ENCODE measurements at regions of chr2 and their contacts with region 1.

Region 1: DNA sequence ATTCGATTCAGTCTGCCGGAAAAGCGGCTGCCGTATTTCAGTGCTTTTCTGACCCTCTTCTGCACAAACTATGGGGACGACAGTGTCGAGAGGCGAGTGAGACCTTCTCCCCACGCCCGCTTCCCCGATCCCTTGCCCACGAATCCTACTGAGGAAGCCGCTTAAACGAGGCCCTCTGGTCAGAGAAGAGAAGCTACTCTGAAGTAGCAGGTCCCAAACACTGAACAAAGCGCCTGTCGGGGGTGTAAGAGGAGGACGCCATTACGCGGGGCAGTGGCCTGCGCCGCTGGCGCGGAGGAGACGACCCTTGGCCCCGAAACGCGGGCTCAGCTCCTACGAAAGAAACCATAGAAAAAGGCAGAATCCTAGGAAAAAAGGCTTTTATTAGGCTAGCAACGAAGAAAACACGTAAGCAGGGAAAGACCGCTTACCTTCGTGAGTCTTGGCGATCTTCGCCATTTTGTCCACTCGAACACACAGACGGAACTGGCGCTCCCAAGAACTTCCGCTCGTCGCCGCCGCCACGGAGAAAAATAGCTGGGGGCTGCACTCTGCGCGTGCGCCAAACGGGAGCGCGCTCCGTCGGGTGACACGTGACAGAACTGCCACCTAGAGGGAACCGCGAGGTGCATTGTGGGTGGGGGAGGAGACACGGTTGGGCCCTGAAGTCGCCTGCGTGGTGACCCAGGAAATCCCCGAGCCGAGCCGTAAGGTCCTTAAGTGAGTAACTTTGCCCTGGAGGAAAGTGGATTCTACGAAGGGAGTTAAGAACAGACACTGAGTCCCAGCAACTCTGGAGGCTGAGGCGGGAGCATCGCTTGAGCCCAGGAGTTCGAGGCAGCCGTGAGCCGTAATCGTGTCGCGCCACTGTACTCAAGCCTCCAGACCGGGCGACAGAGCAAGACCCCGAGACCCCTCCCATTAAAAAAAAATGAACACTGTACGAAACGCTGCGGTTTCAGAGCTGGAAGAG is at the start of gene SF3B1:
- DNase-seq: peak; percentile 100
- H3K4me3 Mint-ChIP-seq: peak within 1 kb of the TSS; percentile 99
- H3K27ac Mint-ChIP-seq: peak within 1 kb of the TSS; percentile 100
- H3K4me1 Mint-ChIP-seq: peaks cover 46% of the 10 kb centered on the region
- H3K27me3 Mint-ChIP-seq: no peaks in the 10 kb centered on the region
- total RNA-seq, gene SF3B1: 235 to 248 TPM

Region 2: GRCh38 chr2:196171248-196171871 is 1263.5 kb before region 1 on chr2 and contains the start of gene STK17B:
- CTCF ChIA-PET with region 1: no interaction called
- intact Hi-C with region 1: loop called (anchors 10 kb)
- DNase-seq: peak; percentile 98
- H3K4me3 Mint-ChIP-seq: peak within 1 kb of the TSS; percentile 93
- H3K27ac Mint-ChIP-seq: peak within 1 kb of the TSS; percentile 92
- H3K4me1 Mint-ChIP-seq: peaks cover 34% of the 10 kb centered on the region
- H3K27me3 Mint-ChIP-seq: no peaks in the 10 kb centered on the region
- total RNA-seq, gene STK17B: 141 to 143 TPM

Region 3: GRCh38 chr2:196798980-196799379 is 635.8 kb before region 1 on chr2:
- CTCF ChIA-PET with region 1: no interaction called
- intact Hi-C with region 1: loop called (anchors 2 kb)
- DNase-seq: no peak
- H3K4me3 Mint-ChIP-seq: peak overlapping the region; percentile 91
- H3K27ac Mint-ChIP-seq: peak overlapping the region; percentile 90
- H3K4me1 Mint-ChIP-seq: peaks cover 44% of the 10 kb centered on the region
- H3K27me3 Mint-ChIP-seq: peaks cover 3% of the 10 kb centered on the region

Region 4: DNA sequence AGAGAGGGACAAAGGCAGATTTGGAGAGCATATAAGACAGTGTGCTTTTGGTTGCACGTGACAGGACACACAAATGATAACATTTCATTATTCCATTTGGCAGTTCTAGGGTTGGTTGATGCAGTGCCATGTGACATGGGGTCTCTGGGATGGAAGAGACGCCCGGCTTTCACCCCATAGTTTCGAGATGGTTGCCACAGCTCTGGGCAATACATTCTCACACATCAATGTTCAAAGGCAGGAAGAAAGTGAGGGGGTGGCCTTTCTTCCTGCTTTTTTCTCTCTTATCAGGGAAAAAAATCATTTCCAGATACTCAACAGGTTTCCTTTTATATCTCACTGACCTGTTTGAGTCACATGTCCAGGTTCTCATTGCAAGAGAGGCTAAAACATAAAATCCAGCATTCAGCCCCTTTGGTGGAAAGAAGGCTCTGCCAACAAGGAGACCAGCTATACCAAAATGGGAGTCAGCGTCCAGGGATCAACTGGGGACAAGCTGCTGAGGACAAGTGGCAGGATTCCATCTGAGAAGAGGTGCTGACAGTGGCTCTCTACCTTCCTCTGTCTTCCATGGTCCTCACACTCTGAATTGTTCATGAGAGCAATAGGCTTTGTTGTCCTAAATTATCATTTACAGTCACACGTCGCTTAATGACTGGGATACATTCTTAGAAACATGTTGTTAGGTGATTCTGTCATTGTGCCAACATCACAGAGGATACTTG is 95.2 kb before region 1 on chr2:
- CTCF ChIA-PET with region 1: no interaction called
- intact Hi-C with region 1: no loop called
- DNase-seq: no peak
- H3K4me3 Mint-ChIP-seq: no peak overlapping the region
- H3K27ac Mint-ChIP-seq: no peak overlapping the region
- H3K4me1 Mint-ChIP-seq: peaks cover 14% of the 10 kb centered on the region
- H3K27me3 Mint-ChIP-seq: no peaks in the 10 kb centered on the region

Region 5: GRCh38 chr2:197388866-197389587 is 45.8 kb before region 1 on chr2:
- CTCF ChIA-PET with region 1: no interaction called
- intact Hi-C with region 1: no loop called
- DNase-seq: no peak
- H3K4me3 Mint-ChIP-seq: no peak overlapping the region
- H3K27ac Mint-ChIP-seq: no peak overlapping the region
- H3K4me1 Mint-ChIP-seq: peaks cover 3% of the 10 kb centered on the region
- H3K27me3 Mint-ChIP-seq: no peaks in the 10 kb centered on the region

Region 6: GRCh38 chr2:197453161-197453914 is 18.5 kb after region 1 on chr2 and contains the start of gene COQ10B:
- CTCF ChIA-PET with region 1: interaction called, 7 read pairs
- intact Hi-C with region 1: loop called (anchors 1 kb)
- DNase-seq: peak; percentile 99
- H3K4me3 Mint-ChIP-seq: peak within 1 kb of the TSS; percentile 100
- H3K27ac Mint-ChIP-seq: peak within 1 kb of the TSS; percentile 100
- H3K4me1 Mint-ChIP-seq: peaks cover 45% of the 10 kb centered on the region
- H3K27me3 Mint-ChIP-seq: no peaks in the 10 kb centered on the region
- total RNA-seq, gene COQ10B: 17.5 to 17.8 TPM

Region 7: GRCh38 chr2:197515739-197516392 is 81.0 kb after region 1 on chr2 and contains the start of gene MOB4:
- CTCF ChIA-PET with region 1: interaction called, 3 read pairs
- intact Hi-C with region 1: loop called (anchors 1 kb)
- DNase-seq: peak; percentile 93
- H3K4me3 Mint-ChIP-seq: peak within 1 kb of the TSS; percentile 98
- H3K27ac Mint-ChIP-seq: peak within 1 kb of the TSS; percentile 89
- H3K4me1 Mint-ChIP-seq: peaks cover 37% of the 10 kb centered on the region
- H3K27me3 Mint-ChIP-seq: no peaks in the 10 kb centered on the region
- total RNA-seq, gene MOB4: 10.7 to 14.1 TPM

Region 8: GRCh38 chr2:197873293-197873701 is 438.5 kb after region 1 on chr2:
- CTCF ChIA-PET with region 1: no interaction called
- intact Hi-C with region 1: loop called (anchors 10 kb)
- DNase-seq: no peak
- H3K4me3 Mint-ChIP-seq: no peak overlapping the region
- H3K27ac Mint-ChIP-seq: no peak overlapping the region
- H3K4me1 Mint-ChIP-seq: peaks cover 65% of the 10 kb centered on the region
- H3K27me3 Mint-ChIP-seq: no peaks in the 10 kb centered on the region

Measured in activated naive CD4-positive, alpha-beta T cell treated with anti-CD3 and anti-CD28 coated beads for 36 hours (primary cell).